HepG2 (cell line): ENCODE measurements at regions of chr13 and their contacts with region 1.

Region 1: GRCh38 chr13:97275265-97275664 is 53.1 kb downstream of the MBNL2 start:
- DNase-seq: peak; percentile 57
- ATAC-seq: peak; percentile 67
- H3K4me3 ChIP-seq: peak overlapping the region in 1 of 3 experiments; percentile 39; a peak in 1 of 6 replicates
- H3K27ac ChIP-seq: peak overlapping the region; percentile 86
- H3K4me1 ChIP-seq: peaks cover 98% of the 10 kb centered on the region
- H3K27me3 ChIP-seq: no peaks in the 10 kb centered on the region
- CTCF ChIP-seq: no peak
- EP300 ChIP-seq: no peak; a peak in 1 of 4 replicates
- POLR2A ChIP-seq: no peak
- RAD21 ChIP-seq: no peak

Region 2: GRCh38 chr13:97242755-97243497 is 32.3 kb before region 1 on chr13:
- CTCF ChIA-PET with region 1: no interaction called
- POLR2A ChIA-PET with region 1: no interaction called
- in situ Hi-C with region 1: no loop called
- intact Hi-C with region 1: loop called (anchors 1 kb)
- DNase-seq: no peak
- ATAC-seq: peak; percentile 23; the same call in 2 of the 3 replicates
- H3K4me3 ChIP-seq: peak overlapping the region in 1 of 3 experiments; percentile 45; a peak in 2 of 6 replicates
- H3K27ac ChIP-seq: peak overlapping the region; percentile 79
- H3K4me1 ChIP-seq: peaks cover 98% of the 10 kb centered on the region
- H3K27me3 ChIP-seq: no peaks in the 10 kb centered on the region
- CTCF ChIP-seq: no peak
- EP300 ChIP-seq: no peak
- POLR2A ChIP-seq: no peak
- RAD21 ChIP-seq: no peak

Region 3: GRCh38 chr13:97257800-97258799 is 17.2 kb before region 1 on chr13:
- CTCF ChIA-PET with region 1: no interaction called
- POLR2A ChIA-PET with region 1: interaction called, 12 read pairs
- in situ Hi-C with region 1: no loop called
- intact Hi-C with region 1: loop called (anchors 2 kb)
- DNase-seq: peak; percentile 87
- ATAC-seq: peak; percentile 73
- H3K4me3 ChIP-seq: peak overlapping the region in 1 of 3 experiments; percentile 32; a peak in 1 of 6 replicates
- H3K27ac ChIP-seq: peak overlapping the region; percentile 92
- H3K4me1 ChIP-seq: peaks cover 86% of the 10 kb centered on the region
- H3K27me3 ChIP-seq: no peaks in the 10 kb centered on the region
- CTCF ChIP-seq: peak; percentile 61
- EP300 ChIP-seq: peak; percentile 68 to 91
- POLR2A ChIP-seq: no peak
- RAD21 ChIP-seq: no peak

Region 4: DNA sequence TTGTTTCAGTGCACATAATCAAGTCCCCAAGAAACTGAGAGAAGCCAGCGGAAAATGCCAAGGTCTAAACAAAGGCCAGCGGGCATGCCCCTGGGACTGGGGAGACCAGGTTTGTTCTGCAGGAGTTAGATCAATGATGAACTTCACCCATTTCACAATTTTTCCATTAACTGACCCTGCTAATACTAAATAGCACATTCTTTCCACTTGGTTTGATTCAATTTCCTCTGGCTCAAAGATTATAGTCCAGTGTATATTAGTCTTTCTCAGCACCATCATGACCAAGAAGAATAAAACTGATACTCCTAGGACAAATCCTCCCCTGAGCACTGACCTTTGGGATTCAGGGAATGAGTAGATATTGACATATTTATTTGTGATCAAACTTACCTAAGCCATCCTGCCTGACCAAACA is 13.2 kb after region 1 on chr13:
- CTCF ChIA-PET with region 1: no interaction called
- POLR2A ChIA-PET with region 1: no interaction called
- in situ Hi-C with region 1: no loop called
- intact Hi-C with region 1: loop called (anchors 2 kb)
- DNase-seq: peak; percentile 57
- ATAC-seq: peak; percentile 88
- H3K4me3 ChIP-seq: no peak overlapping the region
- H3K27ac ChIP-seq: peak overlapping the region; percentile 54
- H3K4me1 ChIP-seq: peaks cover 42% of the 10 kb centered on the region
- H3K27me3 ChIP-seq: no peaks in the 10 kb centered on the region
- CTCF ChIP-seq: no peak
- EP300 ChIP-seq: peak; percentile 49 to 73; a peak in 3 of 4 replicates
- POLR2A ChIP-seq: 0 out of 4 replicates have a peak, but pooled peaks of 1 of the 2 experiments have one; percentile 23
- RAD21 ChIP-seq: 0 out of 2 replicates have a peak, but pooled peaks have one; percentile 15

Region 5: DNA sequence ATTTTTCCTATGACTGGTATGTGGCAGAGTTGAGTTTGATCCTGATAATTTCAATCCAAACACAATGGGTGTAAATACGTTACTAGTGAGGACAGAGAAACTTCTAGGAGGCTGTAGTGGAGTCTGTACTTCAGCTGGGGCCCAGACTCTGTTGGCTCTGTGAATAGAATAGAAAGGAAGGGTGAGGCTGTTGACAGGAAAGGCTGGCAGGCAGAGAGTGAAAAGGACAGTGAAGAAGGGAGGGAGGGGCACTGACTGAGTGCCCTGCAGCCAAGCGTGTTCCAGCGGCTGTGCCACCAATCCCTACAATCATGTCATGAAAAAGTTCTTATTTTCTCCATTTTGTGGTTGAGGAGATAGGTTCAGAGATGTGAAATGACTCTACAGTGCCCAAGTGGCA is 27.3 kb after region 1 on chr13:
- CTCF ChIA-PET with region 1: no interaction called
- POLR2A ChIA-PET with region 1: no interaction called
- in situ Hi-C with region 1: no loop called
- intact Hi-C with region 1: no loop called
- DNase-seq: no peak
- ATAC-seq: no peak
- H3K4me3 ChIP-seq: no peak overlapping the region
- H3K27ac ChIP-seq: no peak overlapping the region
- H3K4me1 ChIP-seq: peaks cover 90% of the 10 kb centered on the region
- H3K27me3 ChIP-seq: no peaks in the 10 kb centered on the region
- CTCF ChIP-seq: no peak
- EP300 ChIP-seq: no peak
- POLR2A ChIP-seq: no peak
- RAD21 ChIP-seq: no peak

Region 6: GRCh38 chr13:97344265-97345175 is 69.3 kb after region 1 on chr13:
- CTCF ChIA-PET with region 1: no interaction called
- POLR2A ChIA-PET with region 1: no interaction called
- in situ Hi-C with region 1: no loop called
- intact Hi-C with region 1: loop called (anchors 2 kb)
- DNase-seq: peak; percentile 62
- ATAC-seq: peak; percentile 87
- H3K4me3 ChIP-seq: no peak overlapping the region
- H3K27ac ChIP-seq: no peak overlapping the region
- H3K4me1 ChIP-seq: peaks cover 18% of the 10 kb centered on the region
- H3K27me3 ChIP-seq: no peaks in the 10 kb centered on the region
- CTCF ChIP-seq: peak; percentile 73
- EP300 ChIP-seq: no peak
- POLR2A ChIP-seq: no peak
- RAD21 ChIP-seq: peak; percentile 30; the same call in 1 of the 2 replicates